ENCODE measurements at regions of chr9 and their contacts with region 1.

Region 1: DNA sequence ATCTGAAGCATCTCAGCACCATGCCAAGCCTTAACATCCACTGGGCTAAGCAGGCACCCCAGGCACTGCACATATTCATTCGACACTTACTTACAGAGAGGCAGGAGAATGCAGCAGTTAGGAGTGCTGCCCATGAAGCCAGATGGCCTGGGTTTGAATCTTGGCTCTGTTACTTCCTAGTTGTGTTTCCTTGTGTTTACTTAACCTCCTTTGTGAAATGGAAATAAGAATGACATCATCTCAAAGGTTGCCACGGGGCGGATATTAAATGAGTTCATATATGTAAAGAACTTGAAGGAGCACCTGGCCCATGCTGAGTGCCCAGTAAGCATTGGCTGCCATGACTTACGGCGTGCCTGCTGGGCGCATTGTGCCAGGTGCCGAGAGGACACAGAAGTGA is 565.2 kb downstream of the CDK5RAP2 start:
- DNase-seq: no peak
- H3K4me3 ChIP-seq: no peak overlapping the region
- H3K27ac ChIP-seq: no peak overlapping the region
- H3K4me1 ChIP-seq: no peaks in the 10 kb centered on the region
- H3K27me3 ChIP-seq: no peaks in the 10 kb centered on the region
- CTCF ChIP-seq: no peak
- POLR2A ChIP-seq: no peak

Region 2: GRCh38 chr9:119675951-119676350 is 338.8 kb before region 1 on chr9:
- intact Hi-C with region 1: loop called (anchors 5 kb)
- DNase-seq: no peak
- H3K4me3 ChIP-seq: no peak overlapping the region
- H3K27ac ChIP-seq: no peak overlapping the region
- H3K4me1 ChIP-seq: no peaks in the 10 kb centered on the region
- H3K27me3 ChIP-seq: no peaks in the 10 kb centered on the region
- CTCF ChIP-seq: no peak
- POLR2A ChIP-seq: no peak

Region 3: GRCh38 chr9:119968836-119969707 is 45.7 kb before region 1 on chr9:
- intact Hi-C with region 1: no loop called
- DNase-seq: peak; percentile 65 to 77
- H3K4me3 ChIP-seq: no peak overlapping the region
- H3K27ac ChIP-seq: no peak overlapping the region
- H3K4me1 ChIP-seq: peaks cover 0 to 3% of the 10 kb centered on the region in 2 donors
- H3K27me3 ChIP-seq: no peaks in the 10 kb centered on the region
- CTCF ChIP-seq: peak; percentile 48 to 73 (median 72)
- POLR2A ChIP-seq: no peak

Region 4: DNA sequence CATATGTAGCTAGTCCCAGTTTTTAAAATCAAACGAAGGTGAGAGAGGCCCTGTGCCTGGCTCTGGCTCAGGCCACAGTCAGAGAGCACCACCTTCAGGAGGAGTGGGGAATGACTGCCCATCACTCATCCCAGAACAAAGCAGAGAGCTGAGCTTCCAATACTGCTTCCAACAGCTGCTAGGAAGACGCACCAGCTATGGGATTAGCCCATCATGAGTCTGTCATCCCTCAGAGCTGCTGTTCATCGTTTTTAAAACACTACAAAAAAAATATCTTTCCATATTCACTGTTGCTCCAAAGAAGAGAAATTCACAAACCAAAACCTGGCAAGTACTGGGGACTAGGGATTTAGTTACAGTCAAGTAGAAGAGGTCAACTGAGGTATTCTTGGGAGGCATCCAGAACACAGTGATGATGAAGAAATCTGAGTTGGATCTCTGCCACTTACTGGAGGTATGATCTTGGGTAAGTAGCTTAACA is 462.8 kb after region 1 on chr9:
- intact Hi-C with region 1: no loop called
- DNase-seq: no peak
- H3K4me3 ChIP-seq: no peak overlapping the region
- H3K27ac ChIP-seq: peak overlapping the region in 1 of 2 donors; percentile 35
- H3K4me1 ChIP-seq: peaks cover 0 to 14% of the 10 kb centered on the region in 2 donors
- H3K27me3 ChIP-seq: no peaks in the 10 kb centered on the region
- CTCF ChIP-seq: peak; percentile 59 to 79 (median 75)
- POLR2A ChIP-seq: no peak